ENCODE measurements at regions of chr5 and their contacts with region 1.

Region 1: GRCh38 chr5:157994906-157995519 is 136.1 kb upstream of the CLINT1 start:
- DNase-seq: peak; percentile 73 to 85 (median 77)
- H3K4me3 ChIP-seq: no peak overlapping the region
- H3K27ac ChIP-seq: no peak overlapping the region
- H3K4me1 ChIP-seq: peaks cover 0 to 4% (median 0%) of the 10 kb centered on the region in 3 donors
- H3K27me3 ChIP-seq: no peaks in the 10 kb centered on the region
- CTCF ChIP-seq: peak; percentile 74

Region 2: DNA sequence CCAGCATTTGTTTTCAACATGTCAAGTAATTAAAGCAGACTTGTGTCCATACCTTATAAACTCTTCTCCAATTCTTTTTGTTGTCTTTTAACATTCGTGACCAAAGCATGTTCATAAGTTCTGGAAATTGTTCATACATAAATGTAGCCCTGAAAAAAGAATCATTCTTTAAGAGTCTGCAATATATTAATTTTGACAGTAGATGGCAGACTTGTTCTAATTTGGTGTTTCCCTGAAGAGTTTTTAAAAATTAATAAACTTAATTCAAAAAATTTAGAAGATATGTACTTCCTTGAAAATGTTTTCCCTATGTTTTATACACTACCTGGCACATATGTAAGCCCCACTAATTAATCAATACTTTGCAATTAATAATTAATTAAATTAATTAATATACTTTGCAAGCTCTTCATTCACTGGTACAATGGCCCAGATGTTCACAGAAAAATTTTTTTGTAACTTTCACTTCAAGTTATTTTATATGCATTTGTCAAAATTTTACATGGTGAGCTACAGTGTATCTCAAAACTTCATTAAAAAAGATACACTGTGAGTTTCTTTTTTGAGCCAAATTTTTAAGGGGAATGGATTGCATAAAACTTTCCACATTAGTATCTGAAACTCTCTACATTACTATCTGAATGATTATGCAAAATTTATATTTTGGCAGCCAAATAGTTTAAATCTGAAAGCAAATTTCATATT is 178.2 kb before region 1 on chr5:
- intact Hi-C with region 1: loop called (anchors 10 kb)
- DNase-seq: peak in 1 of 5 donors; percentile 43
- H3K4me3 ChIP-seq: no peak overlapping the region
- H3K27ac ChIP-seq: no peak overlapping the region
- H3K4me1 ChIP-seq: peaks cover 0 to 4% (median 4%) of the 10 kb centered on the region in 3 donors
- H3K27me3 ChIP-seq: no peaks in the 10 kb centered on the region
- CTCF ChIP-seq: peak; percentile 34

Measured in kidney (tissue), 22 donors.